Heart right ventricle (tissue), 16 donors: ENCODE measurements at regions of chr12 and their contacts with region 1.

Region 1: DNA sequence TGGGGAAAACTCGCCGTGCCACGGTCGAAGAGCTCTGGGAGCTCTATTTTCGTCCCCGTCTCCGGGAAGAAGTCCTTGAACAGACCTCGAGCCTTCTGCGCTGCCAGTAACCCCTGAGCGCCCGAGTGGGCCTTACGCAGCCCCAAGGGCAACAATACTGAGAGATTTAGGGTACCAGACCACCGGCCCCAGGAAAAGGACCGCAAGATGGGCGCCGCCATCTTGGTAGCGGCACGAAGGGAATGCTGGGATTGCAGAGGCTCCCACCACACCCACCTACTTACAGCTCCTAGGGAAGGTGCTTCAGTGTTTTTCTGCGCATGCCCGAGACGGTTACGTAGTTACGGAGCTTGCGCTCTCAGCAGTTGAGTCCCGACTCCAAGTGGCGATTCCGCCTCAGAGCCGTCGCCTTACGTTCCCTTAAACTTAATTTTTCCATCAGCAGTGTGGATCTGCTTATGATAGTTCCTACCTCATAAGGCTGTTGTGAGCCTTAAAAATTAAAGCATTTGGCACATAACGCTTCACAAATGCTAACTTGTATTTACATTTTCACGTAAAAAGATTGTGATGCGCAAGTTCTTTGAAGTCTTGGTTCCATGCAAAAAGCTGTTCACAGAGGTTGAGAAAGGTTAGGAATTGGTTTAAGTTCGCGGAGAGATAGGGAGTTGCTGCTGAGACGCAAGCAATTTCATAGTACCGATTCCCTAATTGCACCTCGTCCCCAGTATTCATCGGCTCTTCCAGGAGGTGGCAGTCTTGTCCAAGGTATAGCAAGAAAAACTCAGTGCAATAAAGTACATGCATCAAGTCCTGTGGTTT is at the start of gene YARS2:
- DNase-seq: peak; percentile 89 to 97
- ATAC-seq: peak; percentile 99 to 100 (median 99)
- H3K4me3 ChIP-seq: peak within 1 kb of the TSS; percentile 54 to 97 (median 85)
- H3K27ac ChIP-seq: peak within 1 kb of the TSS; percentile 57 to 95 (median 87)
- H3K4me1 ChIP-seq: peaks cover 0 to 32% (median 20%) of the 10 kb centered on the region in 9 donors
- H3K27me3 ChIP-seq: no peaks in the 10 kb centered on the region
- CTCF ChIP-seq: peak; percentile 53 to 87 (median 79)
- total RNA-seq, gene YARS2: 10.6 to 16.9 (median 12.7) TPM

Region 2: DNA sequence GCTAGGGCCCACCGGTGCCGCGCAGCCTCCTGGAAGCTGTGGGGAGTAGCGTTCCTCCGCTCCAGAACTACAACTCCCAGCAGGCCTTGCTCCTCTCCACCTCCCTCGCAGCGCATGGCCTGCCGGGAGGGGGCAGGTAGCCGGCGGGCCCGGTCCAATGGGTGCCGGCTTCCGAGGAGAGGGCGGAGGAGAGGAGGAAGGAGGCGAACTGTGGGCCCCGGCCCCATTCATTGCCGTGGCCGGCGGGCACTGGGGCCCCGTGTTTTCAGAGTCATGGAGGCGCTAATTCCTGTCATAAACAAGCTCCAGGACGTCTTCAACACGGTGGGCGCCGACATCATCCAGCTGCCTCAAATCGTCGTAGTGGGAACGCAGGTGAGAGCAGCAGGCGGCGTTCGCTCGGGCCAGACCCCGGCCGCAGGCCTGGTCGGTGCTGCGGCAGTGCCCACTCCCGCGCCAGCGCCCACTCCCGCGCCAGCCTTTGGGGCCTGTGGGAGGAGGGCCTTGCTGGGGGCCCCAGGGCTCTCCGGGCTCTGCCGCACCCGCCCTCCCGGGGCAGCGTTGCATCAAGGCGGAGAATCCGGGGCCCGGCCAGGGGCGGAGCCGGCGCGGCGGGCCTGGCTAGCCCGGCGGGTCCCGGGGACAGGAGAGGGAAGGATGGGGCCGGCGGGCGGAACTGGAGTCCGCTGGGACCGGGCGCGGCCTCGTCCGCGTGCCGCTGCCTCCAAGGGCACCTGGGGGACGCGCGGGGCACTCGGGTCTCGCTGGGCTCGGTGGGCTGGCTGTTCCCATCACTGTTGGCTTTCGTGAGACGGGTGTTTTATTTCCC is 76.6 kb before region 1 on chr12 and contains the start of gene DNM1L:
- intact Hi-C with region 1: loop called in 1 of 10 experiments (anchors 1 kb)
- DNase-seq: peak; percentile 93 to 95
- ATAC-seq: peak; percentile 98 to 99 (median 99)
- H3K4me3 ChIP-seq: peak within 1 kb of the TSS; percentile 47 to 100 (median 90)
- H3K27ac ChIP-seq: peak within 1 kb of the TSS; percentile 80 to 97 (median 94)
- H3K4me1 ChIP-seq: peaks cover 0 to 24% (median 12%) of the 10 kb centered on the region in 9 donors
- H3K27me3 ChIP-seq: no peaks in the 10 kb centered on the region
- CTCF ChIP-seq: peak in 7 of 9 donors; percentile 7 to 35 (median 21)
- total RNA-seq, gene DNM1L: 52.6 to 81.5 (median 59.0) TPM

Region 3: GRCh38 chr12:32718926-32719325 is 36.9 kb before region 1 on chr12:
- intact Hi-C with region 1: no loop called
- DNase-seq: no peak
- ATAC-seq: no peak
- H3K4me3 ChIP-seq: no peak overlapping the region
- H3K27ac ChIP-seq: no peak overlapping the region
- H3K4me1 ChIP-seq: peaks cover 0 to 8% (median 0%) of the 10 kb centered on the region in 9 donors
- H3K27me3 ChIP-seq: no peaks in the 10 kb centered on the region
- CTCF ChIP-seq: no peak

Region 4: DNA sequence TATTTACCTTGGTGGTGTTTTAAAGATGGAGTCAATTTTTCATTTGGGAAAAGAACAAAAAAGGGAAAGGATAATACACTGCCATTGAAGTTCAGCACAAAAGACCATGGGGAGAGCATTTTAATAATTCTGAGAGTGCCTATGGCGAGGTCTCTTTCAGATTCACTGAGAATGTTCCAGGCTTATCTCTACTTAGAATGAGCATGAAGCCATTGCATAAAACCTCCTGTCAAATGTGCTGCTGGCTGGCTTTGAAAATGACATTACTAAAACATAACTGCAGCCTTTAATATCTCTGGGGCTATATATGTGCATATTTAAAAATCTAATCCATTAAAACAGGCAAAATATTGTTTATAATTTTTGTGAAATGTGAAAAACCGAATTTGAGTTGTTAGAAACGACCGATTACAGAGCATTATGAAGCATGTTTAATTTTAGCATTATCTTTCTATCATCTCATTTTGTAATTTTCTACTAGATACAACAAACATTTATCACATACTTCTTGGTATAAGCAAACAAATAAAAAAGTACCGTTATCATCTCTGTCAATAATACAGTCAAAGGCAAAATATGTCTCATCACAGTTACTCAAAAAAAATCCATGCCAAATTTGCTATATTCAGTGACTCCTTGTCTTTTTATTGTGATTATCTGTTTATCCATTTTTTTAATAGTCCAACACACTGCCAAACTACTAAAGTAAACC is 45.6 kb after region 1 on chr12:
- intact Hi-C with region 1: no loop called
- DNase-seq: no peak
- ATAC-seq: peak in 2 of 8 donors; percentile 53 to 62
- H3K4me3 ChIP-seq: no peak overlapping the region
- H3K27ac ChIP-seq: peak overlapping the region in 5 of 10 donors; percentile 5 to 68 (median 40)
- H3K4me1 ChIP-seq: peaks cover 0 to 4% (median 0%) of the 10 kb centered on the region in 9 donors
- H3K27me3 ChIP-seq: no peaks in the 10 kb centered on the region
- CTCF ChIP-seq: no peak

Region 5: GRCh38 chr12:32918890-32919801 is 163.3 kb after region 1 on chr12:
- intact Hi-C with region 1: loop called in 8 of 10 experiments (anchors 1 to 10 kb)
- DNase-seq: peak in 1 of 2 donors; percentile 9
- ATAC-seq: peak in 5 of 8 donors; percentile 35 to 72 (median 67)
- H3K4me3 ChIP-seq: no peak overlapping the region
- H3K27ac ChIP-seq: peak overlapping the region in 1 of 10 donors; percentile 30
- H3K4me1 ChIP-seq: peaks cover 0 to 4% (median 0%) of the 10 kb centered on the region in 9 donors
- H3K27me3 ChIP-seq: no peaks in the 10 kb centered on the region
- CTCF ChIP-seq: peak; percentile 27 to 65 (median 55)

Region 6: GRCh38 chr12:34016361-34016760 is 1260.5 kb after region 1 on chr12:
- intact Hi-C with region 1: loop called in 7 of 10 experiments (anchors 2 to 10 kb)
- DNase-seq: no peak
- ATAC-seq: no peak
- H3K4me3 ChIP-seq: no peak overlapping the region
- H3K27ac ChIP-seq: no peak overlapping the region
- H3K4me1 ChIP-seq: peaks cover 0 to 6% (median 4%) of the 10 kb centered on the region in 9 donors
- H3K27me3 ChIP-seq: peaks cover 0 to 14% (median 0%) of the 10 kb centered on the region in 7 donors
- CTCF ChIP-seq: no peak

Region 7: DNA sequence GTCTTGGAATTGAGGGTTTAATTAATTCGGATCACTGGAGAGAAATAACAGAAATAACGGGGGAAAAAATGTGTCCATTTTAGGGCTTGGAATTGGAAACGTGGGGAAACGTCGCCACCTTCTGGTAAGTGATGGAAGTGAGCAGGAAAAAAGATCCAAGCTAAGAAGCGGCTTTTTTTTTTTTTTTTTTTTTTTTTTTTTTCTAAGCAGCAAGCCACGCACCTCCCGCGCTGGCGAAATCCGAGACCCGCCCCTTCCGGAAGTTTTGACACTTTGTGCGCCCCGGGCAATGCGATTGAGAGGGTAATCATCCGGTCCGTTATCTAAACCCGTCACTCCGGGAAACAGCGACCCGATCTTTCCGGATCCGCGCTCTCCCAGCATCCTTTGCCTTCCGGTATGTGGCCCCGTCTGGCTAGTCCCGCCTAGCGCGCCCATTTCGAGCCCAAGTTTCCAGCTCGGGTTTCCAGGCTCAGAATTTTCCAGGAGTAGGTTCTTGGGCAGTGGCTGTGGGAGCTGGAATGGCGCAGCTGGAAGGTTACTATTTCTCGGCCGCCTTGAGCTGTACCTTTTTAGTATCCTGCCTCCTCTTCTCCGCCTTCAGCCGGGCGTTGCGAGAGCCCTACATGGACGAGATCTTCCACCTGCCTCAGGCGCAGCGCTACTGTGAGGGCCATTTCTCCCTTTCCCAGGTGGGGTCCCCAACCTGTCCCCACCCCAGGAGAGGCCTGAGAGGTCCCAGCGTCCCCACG is 1266.4 kb after region 1 on chr12 and contains the start of gene ALG10:
- intact Hi-C with region 1: loop called (anchors 1 to 10 kb)
- DNase-seq: peak; percentile 95 to 99
- ATAC-seq: peak; percentile 99 to 100 (median 100)
- H3K4me3 ChIP-seq: peak within 1 kb of the TSS; percentile 49 to 87 (median 75)
- H3K27ac ChIP-seq: peak within 1 kb of the TSS; percentile 26 to 90 (median 82)
- H3K4me1 ChIP-seq: peaks cover 0 to 24% (median 18%) of the 10 kb centered on the region in 9 donors
- H3K27me3 ChIP-seq: no peaks in the 10 kb centered on the region
- CTCF ChIP-seq: peak; percentile 67 to 82 (median 74)
- total RNA-seq, gene ALG10: 2.9 to 7.5 (median 4.7) TPM

Region 8: DNA sequence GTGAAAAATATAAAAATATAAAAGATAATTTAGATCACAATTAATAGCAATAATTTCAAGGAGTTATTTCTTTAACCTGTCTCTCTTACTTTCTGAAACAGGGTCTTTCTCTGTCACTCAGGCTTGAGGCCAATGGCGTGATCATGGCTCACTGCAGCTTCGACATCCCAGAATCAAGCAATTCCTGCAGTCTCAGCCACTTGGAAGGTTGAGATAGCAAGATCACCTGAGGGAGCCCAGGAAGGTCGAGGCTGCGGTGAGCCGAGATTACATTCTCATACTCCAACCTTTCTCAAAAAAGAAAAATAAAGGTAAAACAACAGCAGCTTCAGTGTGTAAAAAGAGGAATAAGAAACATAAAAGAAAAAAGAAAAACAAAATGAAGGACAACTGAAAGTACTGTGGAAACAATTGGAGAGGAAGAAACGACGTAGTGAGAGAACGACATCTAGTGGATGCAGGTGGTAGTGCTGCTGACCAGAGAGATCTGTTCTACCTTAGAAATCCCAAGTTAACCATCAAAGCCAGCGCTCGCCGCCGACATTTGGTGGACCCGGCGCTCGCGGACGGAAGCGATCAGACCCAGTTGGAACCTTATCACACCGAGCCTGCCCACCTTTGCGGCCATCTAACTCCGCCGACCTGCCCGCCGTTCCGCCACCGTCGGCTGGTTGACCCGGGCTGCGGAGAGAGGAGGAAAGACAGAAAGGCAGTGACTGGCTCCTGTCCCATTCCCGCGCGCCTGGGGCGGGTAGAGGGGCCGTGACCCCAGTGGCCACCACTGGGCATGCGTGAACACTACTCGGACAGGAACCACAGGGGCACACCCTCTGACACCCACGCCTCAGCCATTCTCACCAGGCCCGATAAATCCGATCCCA is 1462.5 kb after region 1 on chr12:
- intact Hi-C with region 1: loop called in 1 of 10 experiments (anchors 10 kb)
- DNase-seq: peak; percentile 37 to 72
- ATAC-seq: peak; percentile 75 to 94 (median 88)
- H3K4me3 ChIP-seq: peak overlapping the region; percentile 37 to 63 (median 52)
- H3K27ac ChIP-seq: peak overlapping the region in 5 of 10 donors; percentile 4 to 75 (median 61)
- H3K4me1 ChIP-seq: peaks cover 0 to 14% (median 4%) of the 10 kb centered on the region in 9 donors
- H3K27me3 ChIP-seq: peaks cover 0 to 15% (median 7%) of the 10 kb centered on the region in 7 donors
- CTCF ChIP-seq: peak; percentile 76 to 98 (median 94)